Activated T-helper 1 cell treated with anti-CD3 and anti-CD28 coated beads, Interleukin-12 subunit alpha, Interleukin-12 subunit beta, Interleukin-2, Interleukin-4 antibody, amounts not matched to agents 30 ng/mL and 10 ng/mL and 1 ng/mL, durations not matched to agents 14 hours and 24 hours and 36 hours (primary cell): ENCODE measurements at regions of chr4 and their contacts with region 1.

Region 1: GRCh38 chr4:173318648-173319211 is 15.4 kb downstream of the HMGB2 start:
- DNase-seq: no peak
- H3K4me3 Mint-ChIP-seq: no peak overlapping the region
- H3K27ac Mint-ChIP-seq: no peak overlapping the region
- H3K4me1 Mint-ChIP-seq: peaks cover 6% of the 10 kb centered on the region
- H3K27me3 Mint-ChIP-seq: no peaks in the 10 kb centered on the region

Region 2: DNA sequence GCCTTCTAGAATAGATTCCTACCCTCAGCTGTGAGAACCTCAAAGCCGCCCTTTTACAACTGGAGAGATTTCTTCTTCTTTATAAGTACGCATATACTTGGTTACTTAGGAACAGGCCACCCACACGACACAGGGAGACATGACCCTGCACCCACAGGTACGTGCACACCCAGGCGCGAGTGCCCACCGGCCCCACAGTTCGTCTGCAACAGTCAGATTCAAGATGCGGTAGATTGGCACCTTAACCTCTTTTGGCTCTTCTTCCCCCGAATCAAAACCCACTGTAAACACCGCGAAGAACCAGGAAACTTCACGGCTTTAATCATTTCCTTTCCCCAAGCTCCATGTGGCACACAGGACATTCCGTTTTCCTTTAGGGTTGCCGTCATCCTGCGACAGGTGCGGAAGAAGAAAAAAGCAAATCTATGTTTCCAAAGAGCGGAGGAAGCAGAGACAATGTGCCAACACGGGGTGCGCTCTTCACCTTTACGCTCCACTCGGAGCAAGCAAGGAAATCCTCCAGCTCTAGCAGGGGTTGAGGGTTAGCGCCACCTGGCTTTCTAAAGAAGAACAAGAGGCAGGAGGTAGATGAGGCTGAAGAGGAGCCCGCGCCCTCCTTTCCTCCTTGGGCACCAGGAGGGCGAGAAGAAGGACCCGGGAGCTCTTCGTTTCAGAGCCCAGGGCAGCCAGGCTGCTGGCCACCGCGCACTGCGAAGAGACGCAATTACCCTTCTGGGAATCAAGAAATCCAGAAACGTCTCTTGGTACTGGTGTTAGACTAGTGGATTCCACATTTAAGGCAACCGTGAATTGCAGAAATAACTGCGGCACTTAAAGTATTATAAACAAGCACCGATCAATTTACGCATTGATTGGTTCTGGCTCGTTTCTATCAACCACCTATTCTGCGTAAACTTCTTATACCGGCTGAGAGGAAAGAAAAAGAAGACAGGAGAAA is 175.6 kb after region 1 on chr4:
- intact Hi-C with region 1: loop called (anchors 1 kb)
- DNase-seq: peak; percentile 56
- H3K4me3 Mint-ChIP-seq: peak overlapping the region; percentile 87
- H3K27ac Mint-ChIP-seq: no peak overlapping the region
- H3K4me1 Mint-ChIP-seq: peaks cover 33% of the 10 kb centered on the region
- H3K27me3 Mint-ChIP-seq: peaks cover 35% of the 10 kb centered on the region

Region 3: DNA sequence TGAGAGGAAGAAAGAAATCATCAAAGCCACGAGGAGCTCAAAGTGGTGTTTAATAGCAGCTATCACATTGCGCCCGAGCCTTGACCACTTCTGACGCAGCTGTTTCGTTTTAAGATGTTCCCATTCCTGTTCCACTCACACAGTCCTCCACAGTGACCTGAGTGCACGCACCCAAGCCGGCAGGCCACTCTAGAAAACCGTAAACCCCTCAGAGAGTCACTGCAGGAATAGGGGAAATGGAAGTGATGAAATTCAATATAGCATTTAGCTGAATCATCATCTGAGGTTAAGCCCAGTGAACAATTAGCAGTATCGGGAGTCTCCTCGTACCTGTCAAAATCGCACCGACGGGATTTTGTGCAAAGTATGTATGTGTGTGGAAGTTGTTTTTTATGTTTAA is 229.2 kb after region 1 on chr4:
- intact Hi-C with region 1: no loop called
- DNase-seq: no peak
- H3K4me3 Mint-ChIP-seq: no peak overlapping the region
- H3K27ac Mint-ChIP-seq: no peak overlapping the region
- H3K4me1 Mint-ChIP-seq: no peaks in the 10 kb centered on the region
- H3K27me3 Mint-ChIP-seq: peaks cover 36% of the 10 kb centered on the region

Region 4: DNA sequence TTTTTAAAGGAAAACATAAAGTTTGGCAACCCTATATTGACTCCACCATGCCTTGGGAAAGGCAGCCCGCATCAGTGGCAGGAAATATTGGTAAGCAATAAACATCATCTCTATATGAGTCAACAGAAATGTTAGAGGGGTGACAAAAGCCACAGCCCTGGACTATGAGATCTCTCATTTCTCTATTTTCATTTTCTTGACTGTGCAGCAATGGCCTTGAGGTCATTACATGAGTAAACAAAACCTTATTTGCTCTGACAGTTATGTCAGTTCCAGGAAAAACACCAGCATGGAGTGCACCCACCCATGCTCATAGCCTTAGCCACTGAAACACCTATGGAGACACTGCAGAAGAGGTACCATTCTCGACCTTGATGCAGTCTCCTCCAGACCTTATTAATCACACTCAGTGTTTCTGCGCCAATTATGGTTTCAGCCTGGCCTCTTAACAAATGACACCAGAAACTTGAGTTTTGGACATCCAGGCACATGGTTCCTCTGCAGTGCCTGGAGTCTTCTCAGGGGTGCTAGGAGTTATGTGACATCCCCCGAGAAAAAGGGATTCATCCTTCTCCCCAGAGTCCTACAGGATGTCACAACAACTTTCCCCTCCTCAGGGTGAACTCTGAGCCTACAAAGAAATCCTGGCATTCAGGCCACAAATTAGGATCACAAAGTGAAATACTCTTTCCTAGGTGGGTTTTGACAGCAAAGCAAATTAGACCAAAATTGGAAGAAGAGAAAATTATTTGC is 1219.6 kb after region 1 on chr4:
- intact Hi-C with region 1: no loop called
- DNase-seq: peak; percentile 12
- H3K4me3 Mint-ChIP-seq: no peak overlapping the region
- H3K27ac Mint-ChIP-seq: peak overlapping the region; percentile 75
- H3K4me1 Mint-ChIP-seq: peaks cover 31% of the 10 kb centered on the region
- H3K27me3 Mint-ChIP-seq: peaks cover 5% of the 10 kb centered on the region